ENCODE measurements at regions of chr7 and their contacts with region 1.

Region 1: DNA sequence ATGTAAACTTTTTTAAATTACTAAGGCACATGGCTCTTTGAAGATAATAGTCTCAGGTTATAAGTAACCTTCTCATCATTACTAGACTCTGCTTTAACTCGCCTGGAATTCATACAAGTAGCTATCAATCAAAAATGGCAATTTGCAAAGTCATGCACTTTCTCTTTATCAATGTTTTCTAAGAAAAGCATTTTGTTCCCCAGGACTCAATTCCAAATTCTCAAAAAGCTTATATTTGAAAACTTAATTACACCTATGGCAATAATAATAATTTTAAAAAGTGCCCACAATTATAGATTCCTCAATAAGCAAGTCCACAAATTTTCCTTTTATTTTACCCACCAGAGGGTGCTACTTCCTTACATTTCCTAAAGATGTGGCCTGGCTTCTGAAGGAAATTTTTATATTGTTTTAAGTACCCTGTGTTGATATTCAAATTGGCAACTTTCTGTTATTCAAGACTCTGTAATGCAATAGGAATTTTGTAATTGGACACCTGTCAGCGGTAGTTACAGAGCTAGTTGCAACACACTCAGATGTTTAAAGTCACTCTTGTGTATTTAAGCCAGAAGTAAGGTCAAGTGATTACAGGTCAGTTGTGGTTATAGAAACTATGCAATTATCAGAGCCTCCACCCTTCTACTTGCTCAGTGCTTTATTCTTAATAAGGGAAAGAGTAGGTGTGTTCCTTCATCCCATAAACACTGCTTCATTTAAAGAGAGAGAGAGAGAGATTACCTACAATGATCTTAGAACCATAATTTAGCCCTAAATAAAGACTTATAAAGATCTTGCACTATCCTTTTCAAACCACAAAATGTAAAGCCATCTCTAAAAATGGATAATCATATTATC is 47.1 kb upstream of the HYAL4 start:
- DNase-seq: no peak
- ATAC-seq: no peak
- H3K4me3 Mint-ChIP-seq: no peak overlapping the region
- H3K27ac Mint-ChIP-seq: no peak overlapping the region
- H3K4me1 Mint-ChIP-seq: no peaks in the 10 kb centered on the region
- H3K27me3 Mint-ChIP-seq: no peaks in the 10 kb centered on the region

Region 2: DNA sequence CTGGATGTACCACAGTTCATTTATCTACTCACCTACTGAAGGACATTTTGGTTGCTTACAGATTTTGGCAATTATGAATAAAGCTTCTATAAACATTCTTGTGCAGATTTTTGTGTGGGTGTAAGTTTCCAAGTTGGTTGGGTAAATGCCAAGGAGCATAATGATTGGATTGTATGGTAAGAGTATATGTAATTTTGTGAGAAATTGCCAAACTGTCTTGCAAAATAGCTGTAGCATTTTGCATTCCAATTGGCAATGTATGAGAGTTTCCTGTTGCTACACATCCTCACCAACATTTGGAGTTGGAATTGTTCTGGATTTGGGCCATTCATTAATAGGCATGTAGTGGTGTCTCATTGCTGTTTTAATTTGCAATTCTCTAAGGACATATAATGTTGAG is 13.2 kb after region 1 on chr7:
- CTCF ChIA-PET with region 1: no interaction called
- DNase-seq: no peak
- ATAC-seq: no peak
- H3K4me3 Mint-ChIP-seq: no peak overlapping the region
- H3K27ac Mint-ChIP-seq: no peak overlapping the region
- H3K4me1 Mint-ChIP-seq: no peaks in the 10 kb centered on the region
- H3K27me3 Mint-ChIP-seq: peaks cover 5% of the 10 kb centered on the region

Region 3: DNA sequence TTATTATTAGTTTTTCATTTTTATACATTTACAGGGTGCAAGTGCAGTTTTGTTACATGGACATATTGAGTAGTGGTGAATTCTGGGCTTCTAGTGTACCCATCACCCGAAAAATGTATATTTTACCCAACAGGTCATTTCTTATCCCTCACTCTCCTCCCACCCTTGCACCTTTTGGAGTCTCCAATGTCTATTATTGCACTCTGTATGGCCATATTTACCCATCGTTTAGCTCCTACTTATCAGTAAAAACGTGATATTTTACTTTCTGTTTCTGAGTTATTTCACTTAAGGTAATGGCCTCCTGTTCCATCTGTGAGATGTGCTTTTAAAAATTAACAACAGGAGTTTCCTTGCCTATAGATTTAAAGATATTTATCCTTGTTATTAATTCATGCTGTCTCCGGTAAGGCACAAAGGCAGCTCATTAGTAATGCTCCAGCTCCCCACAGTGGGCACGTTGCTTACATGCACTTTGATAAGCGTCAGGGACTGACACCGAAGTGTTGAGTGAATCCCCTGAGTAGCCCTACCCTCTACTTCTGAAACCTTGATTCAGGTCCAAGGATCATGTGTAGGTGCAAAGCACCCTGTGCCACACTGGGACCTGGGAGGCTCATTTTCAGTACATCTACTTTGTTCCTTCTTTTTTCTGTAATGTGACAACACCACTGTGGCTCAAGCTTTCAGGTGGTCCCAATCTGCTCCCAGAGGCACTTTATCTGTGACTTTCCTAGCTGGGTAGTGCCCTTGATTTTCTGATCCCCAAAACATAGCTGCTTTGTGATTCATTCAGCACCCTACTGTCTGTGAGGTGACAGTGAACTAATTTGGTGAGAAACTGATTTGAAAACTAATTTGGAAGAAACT is 74.3 kb after region 1 on chr7:
- CTCF ChIA-PET with region 1: interaction called, 20 read pairs
- DNase-seq: peak; percentile 59
- ATAC-seq: peak; percentile 81
- H3K4me3 Mint-ChIP-seq: no peak overlapping the region
- H3K27ac Mint-ChIP-seq: no peak overlapping the region
- H3K4me1 Mint-ChIP-seq: no peaks in the 10 kb centered on the region
- H3K27me3 Mint-ChIP-seq: peaks cover 3% of the 10 kb centered on the region

Measured in activated CD8-positive, alpha-beta memory T cell treated with anti-CD3 and anti-CD28 coated beads, Interleukin-2, amount 10 ng/mL, durations not matched to agents 7 days and 5 days (primary cell).